GM12878 (cell line): ENCODE measurements at regions of chrX and their contacts with region 1.

Region 1: GRCh38 chrX:132092439-132093065 is 35.3 kb downstream of the FRMD7 start:
- DNase-seq: peak; percentile 25
- ATAC-seq: peak; percentile 93
- H3K4me3 ChIP-seq: no peak overlapping the region
- H3K27ac ChIP-seq: no peak overlapping the region
- H3K4me1 ChIP-seq: no peaks in the 10 kb centered on the region
- H3K27me3 ChIP-seq: no peaks in the 10 kb centered on the region
- CTCF ChIP-seq: peak; percentile 76 to 81 (median 81)
- EP300 ChIP-seq: no peak
- POLR2A ChIP-seq: no peak
- RAD21 ChIP-seq: peak; percentile 71

Region 2: DNA sequence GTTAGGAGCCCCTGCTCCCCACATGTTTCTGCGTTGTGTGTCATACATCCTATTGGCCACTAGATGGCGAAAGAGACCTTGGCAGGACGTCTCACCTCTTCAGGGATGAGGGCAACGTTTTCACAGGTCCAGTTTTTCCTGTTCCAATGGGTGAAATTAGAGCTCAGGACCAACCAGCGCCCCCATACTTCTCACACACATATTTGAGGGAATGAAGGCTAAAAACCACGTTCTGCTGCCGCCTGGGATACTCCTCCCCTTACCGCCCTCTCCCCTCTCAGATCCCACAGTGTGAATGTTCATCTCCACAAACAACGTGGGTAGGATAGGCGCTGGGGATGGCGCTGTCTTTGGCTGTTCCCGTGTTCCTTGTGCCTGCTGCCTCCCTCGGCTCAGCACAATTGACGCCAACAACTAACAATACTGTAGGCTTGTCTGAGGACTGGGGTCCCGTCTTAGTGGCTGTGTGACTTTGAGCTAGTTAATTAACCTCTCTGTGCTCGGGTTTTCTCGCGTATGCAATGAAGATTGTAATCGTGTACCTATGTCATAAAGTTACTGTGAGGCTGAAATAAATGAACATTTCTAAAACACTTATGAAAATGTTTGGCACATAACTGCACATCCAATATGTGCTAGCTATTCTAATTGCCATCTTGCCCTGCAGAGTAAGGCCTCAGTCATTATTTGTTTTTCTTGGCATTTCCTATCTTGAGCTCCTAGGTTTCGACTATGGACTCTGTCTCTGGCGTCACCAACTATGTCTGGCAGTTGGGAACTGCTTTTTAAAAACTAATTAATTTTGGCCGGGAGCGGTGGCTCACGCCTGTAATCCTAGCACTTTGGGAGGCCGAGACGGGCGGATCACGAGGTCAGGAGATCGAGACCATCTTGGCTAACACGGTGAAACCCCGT is 250.8 kb before region 1 on chrX:
- CTCF ChIA-PET with region 1: interaction called, 8 read pairs
- POLR2A ChIA-PET with region 1: no interaction called
- RAD21 ChIA-PET with region 1: interaction called, 10 read pairs
- SMC1A ChIA-PET with region 1: interaction called, 13 read pairs
- in situ Hi-C with region 1: no loop called
- intact Hi-C with region 1: no loop called
- DNase-seq: no peak
- ATAC-seq: peak; percentile 98
- H3K4me3 ChIP-seq: no peak overlapping the region
- H3K27ac ChIP-seq: no peak overlapping the region
- H3K4me1 ChIP-seq: no peaks in the 10 kb centered on the region
- H3K27me3 ChIP-seq: no peaks in the 10 kb centered on the region
- CTCF ChIP-seq: peak; percentile 85 to 90 (median 88)
- EP300 ChIP-seq: no peak
- POLR2A ChIP-seq: no peak
- RAD21 ChIP-seq: peak; percentile 96

Region 3: DNA sequence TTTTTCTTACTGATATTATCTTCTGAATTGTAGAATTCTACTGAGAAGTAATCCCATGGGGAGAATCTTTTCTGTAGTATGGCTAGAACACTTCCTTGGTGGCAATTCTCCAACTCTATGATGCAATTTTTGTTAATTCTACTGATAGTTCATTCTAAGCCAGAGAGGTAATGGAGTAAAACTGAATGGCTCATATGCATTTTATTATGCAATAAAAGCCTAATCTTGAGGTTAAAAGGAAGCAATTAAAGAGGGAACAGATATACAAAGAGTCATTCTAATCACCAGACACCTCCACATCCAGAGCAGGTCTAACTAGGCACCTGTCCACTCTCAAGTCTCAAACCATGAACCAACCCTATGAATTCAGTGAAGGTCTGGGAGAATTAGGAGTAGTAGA is 117.0 kb after region 1 on chrX:
- CTCF ChIA-PET with region 1: interaction called, 16 read pairs
- POLR2A ChIA-PET with region 1: no interaction called
- RAD21 ChIA-PET with region 1: interaction called, 9 read pairs
- SMC1A ChIA-PET with region 1: interaction called, 7 read pairs
- in situ Hi-C with region 1: no loop called
- intact Hi-C with region 1: no loop called
- DNase-seq: no peak
- ATAC-seq: peak; percentile 22
- H3K4me3 ChIP-seq: no peak overlapping the region
- H3K27ac ChIP-seq: no peak overlapping the region
- H3K4me1 ChIP-seq: no peaks in the 10 kb centered on the region
- H3K27me3 ChIP-seq: no peaks in the 10 kb centered on the region
- CTCF ChIP-seq: no peak
- EP300 ChIP-seq: no peak
- POLR2A ChIP-seq: no peak
- RAD21 ChIP-seq: no peak

Region 4: GRCh38 chrX:132226169-132226568 is 133.6 kb after region 1 on chrX:
- CTCF ChIA-PET with region 1: interaction called, 102 read pairs
- POLR2A ChIA-PET with region 1: no interaction called
- RAD21 ChIA-PET with region 1: interaction called, 69 read pairs
- SMC1A ChIA-PET with region 1: interaction called, 84 read pairs
- in situ Hi-C with region 1: no loop called
- intact Hi-C with region 1: no loop called
- DNase-seq: no peak
- ATAC-seq: no peak
- H3K4me3 ChIP-seq: no peak overlapping the region
- H3K27ac ChIP-seq: no peak overlapping the region
- H3K4me1 ChIP-seq: no peaks in the 10 kb centered on the region
- H3K27me3 ChIP-seq: no peaks in the 10 kb centered on the region
- CTCF ChIP-seq: peak in 1 of 3 experiments; percentile 37; a peak in 2 of 6 replicates
- EP300 ChIP-seq: no peak
- POLR2A ChIP-seq: no peak
- RAD21 ChIP-seq: peak; percentile 75

Region 5: DNA sequence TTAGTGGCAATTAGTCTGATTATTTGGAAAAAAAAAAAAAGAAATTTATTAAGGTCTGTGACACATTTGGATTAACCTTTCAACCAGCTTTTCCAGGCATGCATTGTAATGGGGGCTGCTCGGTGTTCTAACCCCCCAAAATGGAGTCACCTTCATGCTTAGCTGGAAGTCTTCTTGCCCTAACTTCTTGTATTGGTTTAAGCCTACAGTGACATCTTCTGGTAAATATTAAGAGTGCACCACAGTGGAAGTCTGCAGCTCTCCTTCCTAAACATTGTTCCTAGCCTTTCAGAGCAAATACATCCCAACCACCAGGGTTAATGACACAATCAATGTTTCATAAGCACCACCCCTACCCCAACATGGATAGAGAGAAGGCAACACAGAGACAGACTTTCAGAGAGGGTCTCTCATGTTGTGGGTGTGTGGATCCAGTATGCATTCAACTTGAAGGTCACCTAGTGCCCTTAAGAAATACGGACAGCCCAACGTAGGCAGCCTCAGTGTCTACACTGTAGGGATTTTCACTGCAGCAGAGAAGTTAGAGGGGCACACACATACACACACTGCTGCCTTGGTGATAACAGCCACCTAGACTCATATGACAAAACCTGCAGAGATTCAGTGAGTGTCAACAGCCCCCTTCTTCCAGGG is 539.2 kb after region 1 on chrX:
- CTCF ChIA-PET with region 1: interaction called, 6 read pairs
- POLR2A ChIA-PET with region 1: no interaction called
- RAD21 ChIA-PET with region 1: interaction called, 4 read pairs
- SMC1A ChIA-PET with region 1: interaction called, 6 read pairs
- in situ Hi-C with region 1: no loop called
- intact Hi-C with region 1: loop called (anchors 5 kb)
- DNase-seq: no peak
- ATAC-seq: peak; percentile 80
- H3K4me3 ChIP-seq: no peak overlapping the region
- H3K27ac ChIP-seq: no peak overlapping the region
- H3K4me1 ChIP-seq: no peaks in the 10 kb centered on the region
- H3K27me3 ChIP-seq: no peaks in the 10 kb centered on the region
- CTCF ChIP-seq: peak; percentile 51 to 60 (median 58); a peak in 5 of 6 replicates
- EP300 ChIP-seq: no peak
- POLR2A ChIP-seq: no peak
- RAD21 ChIP-seq: peak; percentile 69

Region 6: GRCh38 chrX:132786217-132786616 is 693.7 kb after region 1 on chrX:
- CTCF ChIA-PET with region 1: no interaction called
- POLR2A ChIA-PET with region 1: no interaction called
- RAD21 ChIA-PET with region 1: no interaction called
- SMC1A ChIA-PET with region 1: no interaction called
- in situ Hi-C with region 1: no loop called
- intact Hi-C with region 1: no loop called
- DNase-seq: no peak
- ATAC-seq: no peak
- H3K4me3 ChIP-seq: no peak overlapping the region
- H3K27ac ChIP-seq: no peak overlapping the region
- H3K4me1 ChIP-seq: no peaks in the 10 kb centered on the region
- H3K27me3 ChIP-seq: no peaks in the 10 kb centered on the region
- CTCF ChIP-seq: no peak
- EP300 ChIP-seq: no peak
- POLR2A ChIP-seq: no peak
- RAD21 ChIP-seq: no peak